ENCODE measurements at regions of chr6 and their contacts with region 1.

Region 1: DNA sequence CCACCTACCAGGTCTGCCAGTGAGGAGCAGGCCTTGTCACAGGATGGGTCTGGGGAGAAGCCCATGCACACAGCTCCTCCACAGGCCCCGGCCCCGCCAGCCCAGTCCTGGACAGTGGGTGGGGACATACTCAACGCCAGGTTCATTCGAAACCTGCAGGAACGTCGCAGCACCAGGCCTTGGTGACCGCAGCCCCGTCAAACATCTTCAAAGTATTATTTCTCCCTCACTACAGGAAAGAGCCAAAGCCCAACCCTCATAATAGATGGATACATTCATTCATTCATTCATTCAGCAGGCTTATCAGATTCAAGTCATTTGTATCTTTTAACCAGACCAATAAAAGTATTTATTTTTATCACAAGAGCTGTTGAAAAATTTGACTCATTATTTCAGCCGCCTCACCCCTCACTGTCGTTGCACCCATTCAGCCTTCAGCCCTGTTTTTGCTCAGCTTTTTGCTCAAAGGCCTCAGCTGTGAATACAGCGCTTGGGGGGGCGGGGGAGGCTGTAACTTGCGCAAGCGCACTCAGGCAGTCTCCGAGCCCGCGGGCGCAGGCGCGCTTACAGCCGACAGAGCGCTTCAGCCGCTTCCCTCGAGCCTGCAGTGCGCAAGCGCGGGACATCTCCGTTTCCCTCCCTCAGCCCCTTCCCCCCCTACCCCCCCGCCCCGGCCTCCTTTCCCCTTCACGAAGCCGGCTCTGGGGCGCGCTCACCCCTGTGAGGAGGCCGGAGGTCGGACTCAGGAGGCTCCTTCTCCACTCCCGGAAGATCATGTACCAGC is at the start of gene C6orf136:
- DNase-seq: peak; percentile 82
- ATAC-seq: peak; percentile 78
- H3K4me3 Mint-ChIP-seq: peak within 1 kb of the TSS; percentile 91
- H3K27ac Mint-ChIP-seq: peak within 1 kb of the TSS; percentile 90
- H3K4me1 Mint-ChIP-seq: peaks cover 35% of the 10 kb centered on the region
- H3K27me3 Mint-ChIP-seq: no peaks in the 10 kb centered on the region
- CTCF ChIP-seq: no peak
- total RNA-seq, gene C6orf136: 21.6 and 35.6 TPM in 2 replicates

Region 2: GRCh38 chr6:30075161-30075986 is 571.3 kb before region 1 on chr6 and contains the start of gene RNF39:
- CTCF ChIA-PET with region 1: no interaction called
- POLR2A ChIA-PET with region 1: no interaction called
- intact Hi-C with region 1: no loop called
- DNase-seq: no peak
- ATAC-seq: no peak
- H3K4me3 Mint-ChIP-seq: peak within 1 kb of the TSS; percentile 42
- H3K27ac Mint-ChIP-seq: no peak within 1 kb of the TSS
- H3K4me1 Mint-ChIP-seq: peaks cover 28% of the 10 kb centered on the region
- H3K27me3 Mint-ChIP-seq: peaks cover 71% of the 10 kb centered on the region
- CTCF ChIP-seq: no peak
- total RNA-seq, gene RNF39: not detected in 2 replicates

Region 3: GRCh38 chr6:30556066-30556905 is 90.4 kb before region 1 on chr6 and contains the start of gene GNL1:
- CTCF ChIA-PET with region 1: no interaction called
- POLR2A ChIA-PET with region 1: no interaction called
- intact Hi-C with region 1: loop called (anchors 1 kb)
- DNase-seq: peak; percentile 99
- ATAC-seq: peak; percentile 89
- H3K4me3 Mint-ChIP-seq: peak within 1 kb of the TSS; percentile 94
- H3K27ac Mint-ChIP-seq: peak within 1 kb of the TSS; percentile 97
- H3K4me1 Mint-ChIP-seq: peaks cover 40% of the 10 kb centered on the region
- H3K27me3 Mint-ChIP-seq: no peaks in the 10 kb centered on the region
- CTCF ChIP-seq: no peak
- total RNA-seq, gene GNL1: 67.2 and 67.4 TPM in 2 replicates

Region 4: GRCh38 chr6:30590994-30591393 is 55.7 kb before region 1 on chr6:
- CTCF ChIA-PET with region 1: no interaction called
- POLR2A ChIA-PET with region 1: interaction called, 12 read pairs
- intact Hi-C with region 1: no loop called
- DNase-seq: no peak
- ATAC-seq: no peak
- H3K4me3 Mint-ChIP-seq: no peak overlapping the region
- H3K27ac Mint-ChIP-seq: no peak overlapping the region
- H3K4me1 Mint-ChIP-seq: no peaks in the 10 kb centered on the region
- H3K27me3 Mint-ChIP-seq: no peaks in the 10 kb centered on the region
- CTCF ChIP-seq: no peak

Region 5: GRCh38 chr6:30626484-30627366 is 19.9 kb before region 1 on chr6 and contains the start of gene ATAT1:
- CTCF ChIA-PET with region 1: no interaction called
- POLR2A ChIA-PET with region 1: interaction called, 5 read pairs
- intact Hi-C with region 1: loop called (anchors 2 kb)
- DNase-seq: peak; percentile 86
- ATAC-seq: peak; percentile 99
- H3K4me3 Mint-ChIP-seq: peak within 1 kb of the TSS; percentile 90
- H3K27ac Mint-ChIP-seq: peak within 1 kb of the TSS; percentile 89
- H3K4me1 Mint-ChIP-seq: peaks cover 21% of the 10 kb centered on the region
- H3K27me3 Mint-ChIP-seq: no peaks in the 10 kb centered on the region
- CTCF ChIP-seq: no peak
- total RNA-seq, gene ATAT1: 6.9 and 10.3 TPM in 2 replicates